Prostate gland (tissue), 2 donors: ENCODE measurements at regions of chr3 and their contacts with region 1.

Region 1: GRCh38 chr3:161649900-161650484 is 153.4 kb downstream of the OTOL1 start:
- DNase-seq: no peak
- H3K4me3 ChIP-seq: no peak overlapping the region
- H3K27ac ChIP-seq: no peak overlapping the region
- H3K4me1 ChIP-seq: no peaks in the 10 kb centered on the region
- H3K27me3 ChIP-seq: no peaks in the 10 kb centered on the region
- CTCF ChIP-seq: no peak
- POLR2A ChIP-seq: no peak

Region 2: GRCh38 chr3:161576714-161577510 is 73.1 kb before region 1 on chr3:
- intact Hi-C with region 1: loop called (anchors 10 kb)
- DNase-seq: no peak
- H3K4me3 ChIP-seq: no peak overlapping the region
- H3K27ac ChIP-seq: no peak overlapping the region
- H3K4me1 ChIP-seq: no peaks in the 10 kb centered on the region
- H3K27me3 ChIP-seq: no peaks in the 10 kb centered on the region
- CTCF ChIP-seq: no peak
- POLR2A ChIP-seq: no peak

Region 3: DNA sequence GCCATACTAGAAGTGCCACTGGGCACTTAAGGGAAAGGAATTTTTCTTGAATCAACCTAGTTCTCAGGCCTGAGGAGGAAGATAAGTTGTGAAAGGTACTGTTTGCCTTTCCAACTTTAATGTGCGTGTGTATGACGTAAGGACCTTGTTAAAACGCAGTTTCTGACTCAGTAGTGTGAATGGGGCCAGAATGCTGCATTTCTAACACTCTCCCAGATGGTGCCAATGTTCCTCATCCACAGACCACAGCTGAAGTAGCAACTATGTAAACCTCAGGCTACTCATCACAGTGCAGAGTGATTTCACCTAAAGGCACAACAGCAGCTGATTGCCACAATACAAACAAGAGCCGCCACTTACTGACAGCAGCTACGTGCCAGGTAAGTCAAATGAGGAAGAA is 49.8 kb before region 1 on chr3:
- intact Hi-C with region 1: no loop called
- DNase-seq: no peak
- H3K4me3 ChIP-seq: no peak overlapping the region
- H3K27ac ChIP-seq: no peak overlapping the region
- H3K4me1 ChIP-seq: no peaks in the 10 kb centered on the region
- H3K27me3 ChIP-seq: no peaks in the 10 kb centered on the region
- CTCF ChIP-seq: no peak
- POLR2A ChIP-seq: no peak

Region 4: GRCh38 chr3:161713731-161714130 is 63.7 kb after region 1 on chr3:
- intact Hi-C with region 1: no loop called
- DNase-seq: no peak
- H3K4me3 ChIP-seq: no peak overlapping the region
- H3K27ac ChIP-seq: no peak overlapping the region
- H3K4me1 ChIP-seq: no peaks in the 10 kb centered on the region
- H3K27me3 ChIP-seq: no peaks in the 10 kb centered on the region
- CTCF ChIP-seq: no peak
- POLR2A ChIP-seq: no peak

Region 5: GRCh38 chr3:161875508-161875907 is 225.5 kb after region 1 on chr3:
- intact Hi-C with region 1: no loop called
- DNase-seq: no peak
- H3K4me3 ChIP-seq: no peak overlapping the region
- H3K27ac ChIP-seq: no peak overlapping the region
- H3K4me1 ChIP-seq: no peaks in the 10 kb centered on the region
- H3K27me3 ChIP-seq: no peaks in the 10 kb centered on the region
- CTCF ChIP-seq: no peak
- POLR2A ChIP-seq: no peak